ENCODE measurements at regions of chr1 and their contacts with region 1.

Region 1: GRCh38 chr1:147389532-147390524 is 147.3 kb downstream of the CHD1L start:
- DNase-seq: no peak
- H3K4me3 ChIP-seq: no peak overlapping the region
- H3K27ac ChIP-seq: no peak overlapping the region
- H3K4me1 ChIP-seq: no peaks in the 10 kb centered on the region
- H3K27me3 ChIP-seq: peaks cover 0 to 19% (median 0%) of the 10 kb centered on the region in 7 donors
- CTCF ChIP-seq: peak in 9 of 11 experiments; percentile 30 to 70 (median 55)
- POLR2A ChIP-seq: no peak

Region 2: GRCh38 chr1:147225193-147225730 is 164.6 kb before region 1 on chr1 and contains the start of gene FMO5:
- intact Hi-C with region 1: no loop called
- DNase-seq: peak; percentile 85
- H3K4me3 ChIP-seq: peak within 1 kb of the TSS; percentile 29 to 78 (median 57)
- H3K27ac ChIP-seq: peak within 1 kb of the TSS; percentile 30 to 88 (median 84)
- H3K4me1 ChIP-seq: peaks cover 0 to 26% (median 9%) of the 10 kb centered on the region in 6 donors
- H3K27me3 ChIP-seq: no peaks in the 10 kb centered on the region
- CTCF ChIP-seq: peak in 7 of 11 experiments; percentile 26 to 51 (median 44)
- POLR2A ChIP-seq: no peak
- total RNA-seq, gene FMO5: 3.0 to 13.4 (median 9.6) TPM

Region 3: GRCh38 chr1:147273409-147274336 is 116.2 kb before region 1 on chr1:
- intact Hi-C with region 1: loop called (anchors 5 kb)
- DNase-seq: no peak
- H3K4me3 ChIP-seq: no peak overlapping the region
- H3K27ac ChIP-seq: no peak overlapping the region
- H3K4me1 ChIP-seq: peaks cover 0 to 11% (median 7%) of the 10 kb centered on the region in 6 donors
- H3K27me3 ChIP-seq: no peaks in the 10 kb centered on the region
- CTCF ChIP-seq: peak in 10 of 11 experiments; percentile 21 to 61 (median 58)
- POLR2A ChIP-seq: no peak

Measured in spleen (tissue), 13 donors.